OCI-LY7 (cell line): ENCODE measurements at regions of chr11 and their contacts with region 1.

Region 1: DNA sequence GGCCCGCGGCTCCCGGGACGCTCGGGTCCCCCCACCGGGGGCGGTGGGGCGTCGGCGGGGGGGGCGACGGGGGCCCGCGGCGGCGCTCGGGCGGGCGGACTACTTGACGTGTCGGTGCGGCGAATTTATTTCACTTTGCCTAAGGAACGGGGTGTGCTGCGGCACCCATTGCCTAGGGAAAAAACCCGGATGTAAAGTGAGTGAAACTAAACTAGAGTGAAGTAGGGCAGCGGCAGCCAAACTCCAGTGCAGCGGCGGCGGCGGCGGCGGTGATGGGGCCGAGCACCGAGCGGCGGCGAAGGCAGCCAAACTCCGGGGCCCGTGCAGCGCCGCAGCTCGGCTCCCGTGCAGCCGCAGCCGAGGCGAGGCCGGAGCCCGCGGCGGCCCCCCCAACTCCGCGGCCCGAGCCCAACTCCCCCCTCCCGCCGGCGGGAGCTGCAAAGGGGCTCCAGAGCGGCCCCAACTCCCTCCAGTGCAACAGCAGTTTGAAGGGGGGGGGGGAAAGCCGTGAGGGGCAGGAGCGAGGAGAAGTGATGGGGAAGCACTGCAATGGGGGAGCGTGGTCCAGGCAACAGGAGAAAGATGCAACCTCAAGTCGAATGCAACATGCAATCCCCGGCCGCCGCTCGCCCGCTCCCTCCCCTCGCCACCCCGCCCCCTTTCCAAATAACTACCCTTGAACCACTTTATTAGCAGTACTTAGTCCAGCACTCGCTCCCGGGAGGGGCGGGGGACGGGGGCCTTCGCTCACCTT is 647 bp upstream of the PHF21A start:
- DNase-seq: peak; percentile 95
- H3K4me3 ChIP-seq: peak overlapping the region; percentile 79
- H3K27ac ChIP-seq: peak overlapping the region; percentile 85
- H3K4me1 ChIP-seq: peaks cover 31% of the 10 kb centered on the region
- CTCF ChIP-seq: no peak

Region 2: DNA sequence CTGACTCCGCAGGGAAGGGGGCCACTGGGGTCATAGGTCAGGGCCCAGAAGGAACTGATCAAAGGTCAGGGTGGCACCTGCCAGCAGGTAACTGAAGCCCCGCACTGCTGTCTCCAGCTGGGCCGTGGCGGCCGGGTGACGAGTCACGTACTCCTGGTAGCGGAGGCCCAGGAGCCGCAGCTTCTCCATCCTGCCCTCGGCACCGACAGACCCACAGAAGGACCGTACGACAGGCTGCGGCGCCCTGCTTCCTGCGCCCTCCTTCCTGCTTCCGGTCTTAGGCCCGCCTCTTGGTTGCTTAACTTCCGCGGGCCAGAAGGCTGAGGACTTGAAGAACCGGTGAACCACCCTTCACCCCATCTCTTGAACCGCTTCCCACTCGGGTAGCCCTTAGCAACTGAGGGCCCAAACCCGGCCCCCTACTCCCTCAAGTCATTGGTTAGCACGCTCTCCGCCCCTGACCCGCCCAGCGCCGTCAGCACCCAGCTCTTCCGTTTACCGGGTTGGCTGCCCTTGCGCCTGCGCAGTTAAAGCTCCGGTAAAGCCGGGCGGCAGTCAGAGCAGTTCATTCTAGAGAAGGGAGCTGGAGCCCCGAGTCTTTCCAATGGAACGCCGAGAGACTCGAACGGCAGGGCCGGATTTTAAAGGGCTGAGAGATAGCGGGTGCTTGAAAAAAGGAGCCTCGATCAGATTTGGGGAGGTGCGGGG is 204.1 kb before region 1 on chr11 and contains the start of gene PEX16:
- CTCF ChIA-PET with region 1: no interaction called
- POLR2A ChIA-PET with region 1: no interaction called
- intact Hi-C with region 1: loop called (anchors 5 kb)
- DNase-seq: peak; percentile 97
- H3K4me3 ChIP-seq: peak within 1 kb of the TSS; percentile 93
- H3K27ac ChIP-seq: peak within 1 kb of the TSS; percentile 88
- H3K4me1 ChIP-seq: peaks cover 41% of the 10 kb centered on the region
- CTCF ChIP-seq: no peak
- total RNA-seq, gene PEX16: 41.0 TPM in 2 replicates

Region 3: GRCh38 chr11:45930031-45930794 is 191.7 kb before region 1 on chr11:
- CTCF ChIA-PET with region 1: no interaction called
- POLR2A ChIA-PET with region 1: no interaction called
- intact Hi-C with region 1: loop called (anchors 2 kb)
- DNase-seq: peak; percentile 96
- H3K4me3 ChIP-seq: peak overlapping the region; percentile 72
- H3K27ac ChIP-seq: peak overlapping the region; percentile 95
- H3K4me1 ChIP-seq: peaks cover 63% of the 10 kb centered on the region
- CTCF ChIP-seq: no peak

Region 4: GRCh38 chr11:46308631-46309419 is 186.9 kb after region 1 on chr11:
- CTCF ChIA-PET with region 1: no interaction called
- POLR2A ChIA-PET with region 1: no interaction called
- intact Hi-C with region 1: loop called (anchors 1 kb)
- DNase-seq: peak; percentile 70
- H3K4me3 ChIP-seq: no peak overlapping the region
- H3K27ac ChIP-seq: no peak overlapping the region
- H3K4me1 ChIP-seq: peaks cover 6% of the 10 kb centered on the region
- CTCF ChIP-seq: peak; percentile 91

Region 5: DNA sequence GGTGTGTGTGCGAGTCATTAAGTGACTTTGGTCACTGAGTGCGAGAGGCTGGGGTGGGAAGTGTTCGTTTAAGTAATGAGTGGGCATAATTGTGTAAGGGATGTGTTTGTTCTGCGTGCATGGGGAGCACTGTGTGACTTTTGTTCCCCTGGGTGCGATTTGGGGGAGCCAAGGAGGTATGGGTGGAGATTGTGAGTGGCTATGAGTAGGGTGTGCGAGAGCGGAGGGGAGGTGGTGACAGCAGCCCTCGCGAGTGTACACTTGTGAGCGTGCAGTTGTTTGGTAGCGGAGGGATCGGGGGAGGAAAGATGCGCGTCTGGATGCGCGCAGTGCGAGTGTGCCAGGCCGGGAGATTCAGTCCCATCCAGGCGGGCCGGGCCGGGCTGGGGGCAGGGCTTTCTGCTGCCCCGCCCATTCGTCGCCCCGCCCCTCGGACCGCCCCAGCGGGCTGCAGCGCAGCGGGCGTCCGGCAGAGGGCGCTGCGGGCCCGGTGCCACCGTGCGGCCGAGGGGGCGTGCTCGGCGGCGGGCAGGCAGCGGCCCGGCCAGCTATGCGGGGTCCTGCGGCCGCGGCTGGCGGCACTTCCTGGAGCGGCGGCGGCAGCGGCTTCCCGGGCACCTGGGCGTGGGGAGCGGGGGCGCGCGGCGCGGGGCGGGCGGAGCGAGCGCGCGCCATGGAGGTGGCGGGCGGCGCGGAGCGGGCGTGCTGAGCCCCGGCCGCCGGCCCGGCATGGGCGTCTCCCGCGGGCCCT is 225.2 kb after region 1 on chr11 and contains the start of gene DGKZ:
- CTCF ChIA-PET with region 1: no interaction called
- POLR2A ChIA-PET with region 1: no interaction called
- intact Hi-C with region 1: loop called (anchors 1 kb)
- DNase-seq: peak; percentile 89
- H3K4me3 ChIP-seq: peak within 1 kb of the TSS; percentile 100
- H3K27ac ChIP-seq: peak within 1 kb of the TSS; percentile 49
- H3K4me1 ChIP-seq: peaks cover 55% of the 10 kb centered on the region
- CTCF ChIP-seq: peak; percentile 70
- total RNA-seq, gene DGKZ: 110 and 134 TPM in 2 replicates